ENCODE measurements at regions of chr5 and their contacts with region 1.

Region 1: GRCh38 chr5:157148734-157149615 is 6.3 kb upstream of the MED7 start:
- H3K4me3 ChIP-seq: no peak overlapping the region
- H3K27ac ChIP-seq: no peak overlapping the region
- H3K4me1 ChIP-seq: no peaks in the 10 kb centered on the region
- CTCF ChIP-seq: no peak

Region 2: DNA sequence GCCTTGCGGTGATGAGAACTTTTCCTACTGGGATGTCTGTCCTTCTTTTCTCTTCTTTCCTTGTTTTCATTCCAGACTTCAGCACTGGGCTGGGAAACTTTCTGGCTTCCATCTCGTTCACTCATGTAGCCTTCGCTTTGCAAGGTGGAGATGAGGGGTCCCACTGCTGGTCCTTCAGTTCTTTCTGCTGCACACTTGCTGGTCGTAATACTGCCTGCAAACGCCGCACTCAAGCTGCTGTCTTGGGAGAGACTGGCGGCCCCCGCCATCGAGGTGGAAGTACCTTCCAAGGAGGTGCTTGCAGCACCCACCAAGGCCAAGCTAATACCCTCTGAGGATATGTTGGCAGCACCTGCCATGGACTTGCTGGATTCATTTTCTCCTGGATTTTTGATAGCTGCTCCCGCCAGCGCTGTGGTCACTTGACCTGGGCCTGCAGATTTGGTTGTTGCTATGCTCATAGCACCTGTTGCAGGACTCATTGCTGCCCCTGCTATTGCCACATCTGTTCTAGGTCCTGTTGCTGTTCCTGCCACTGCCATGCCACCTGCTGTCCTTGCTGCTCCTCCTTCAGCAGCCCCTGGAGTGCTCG is 14.0 kb after region 1 on chr5:
- CTCF ChIA-PET with region 1: interaction called, 14 read pairs
- POLR2A ChIA-PET with region 1: interaction called, 3 read pairs
- H3K4me3 ChIP-seq: no peak overlapping the region
- H3K27ac ChIP-seq: no peak overlapping the region
- H3K4me1 ChIP-seq: no peaks in the 10 kb centered on the region
- CTCF ChIP-seq: no peak

Measured in HEK293 (cell line).